ENCODE measurements at regions of chr1 and their contacts with region 1.

Region 1: DNA sequence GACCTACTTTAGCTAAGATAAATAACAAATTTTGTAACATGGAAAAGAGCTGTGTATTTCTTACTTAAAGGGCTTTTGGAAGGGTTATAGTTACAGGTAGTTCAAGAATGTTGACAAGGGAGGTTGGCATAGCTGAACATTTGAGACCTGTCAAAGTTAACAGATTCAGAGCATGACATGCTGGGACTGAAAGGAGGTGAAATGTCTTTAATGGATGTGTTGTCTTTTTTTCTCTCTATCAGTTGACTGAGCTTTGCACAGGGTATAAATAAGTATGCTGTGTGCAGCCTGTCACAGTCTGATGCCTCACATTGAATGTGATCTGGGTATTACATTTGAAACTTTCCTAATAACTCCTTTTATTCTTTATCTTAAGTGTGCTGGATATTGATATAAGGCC is 411.9 kb upstream of the ZP4 start:
- DNase-seq: no peak
- H3K4me3 Mint-ChIP-seq: no peak overlapping the region
- H3K27ac Mint-ChIP-seq: no peak overlapping the region
- H3K4me1 Mint-ChIP-seq: no peaks in the 10 kb centered on the region
- H3K27me3 Mint-ChIP-seq: no peaks in the 10 kb centered on the region

Region 2: DNA sequence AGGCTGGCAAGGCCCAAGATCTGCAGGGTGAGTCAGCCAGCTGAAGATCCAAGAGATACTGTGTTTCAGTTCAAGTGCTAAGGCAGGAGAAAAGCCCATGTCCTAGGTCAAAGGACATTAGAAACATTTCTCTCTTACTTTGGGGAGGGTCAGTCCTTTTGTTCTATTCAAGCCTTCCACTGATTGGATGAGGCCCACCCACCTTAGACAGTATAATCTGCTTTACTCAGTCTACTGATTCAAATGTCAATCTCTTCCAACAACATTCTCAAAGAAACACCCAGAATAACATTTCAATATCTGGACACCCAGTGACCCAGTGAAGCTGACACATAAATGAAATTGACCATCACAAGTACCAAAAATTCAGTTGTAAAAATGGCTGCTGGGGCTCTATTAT is 44.1 kb before region 1 on chr1:
- CTCF ChIA-PET with region 1: no interaction called
- intact Hi-C with region 1: loop called (anchors 1 kb)
- DNase-seq: no peak
- H3K4me3 Mint-ChIP-seq: no peak overlapping the region
- H3K27ac Mint-ChIP-seq: no peak overlapping the region
- H3K4me1 Mint-ChIP-seq: no peaks in the 10 kb centered on the region
- H3K27me3 Mint-ChIP-seq: no peaks in the 10 kb centered on the region

Measured in activated naive CD4-positive, alpha-beta T cell treated with anti-CD3 and anti-CD28 coated beads for 36 hours (primary cell).